ENCODE measurements at regions of chr6 and their contacts with region 1.

Region 1: GRCh38 chr6:138817822-138818308 is 22.0 kb downstream of the ECT2L start:
- DNase-seq: peak; percentile 100
- H3K4me3 ChIP-seq: no peak overlapping the region
- H3K27ac ChIP-seq: peak overlapping the region; percentile 98
- H3K4me1 ChIP-seq: peaks cover 53% of the 10 kb centered on the region
- H3K27me3 ChIP-seq: no peaks in the 10 kb centered on the region
- CTCF ChIP-seq: no peak

Region 2: GRCh38 chr6:138517635-138518034 is 300.2 kb before region 1 on chr6:
- CTCF ChIA-PET with region 1: no interaction called
- dilution Hi-C with region 1: no loop called
- in situ Hi-C with region 1: no loop called
- intact Hi-C with region 1: no loop called
- DNase-seq: peak; percentile 48
- H3K4me3 ChIP-seq: no peak overlapping the region
- H3K27ac ChIP-seq: no peak overlapping the region
- H3K4me1 ChIP-seq: peaks cover 8% of the 10 kb centered on the region
- H3K27me3 ChIP-seq: no peaks in the 10 kb centered on the region
- CTCF ChIP-seq: peak; percentile 87 to 95

Region 3: DNA sequence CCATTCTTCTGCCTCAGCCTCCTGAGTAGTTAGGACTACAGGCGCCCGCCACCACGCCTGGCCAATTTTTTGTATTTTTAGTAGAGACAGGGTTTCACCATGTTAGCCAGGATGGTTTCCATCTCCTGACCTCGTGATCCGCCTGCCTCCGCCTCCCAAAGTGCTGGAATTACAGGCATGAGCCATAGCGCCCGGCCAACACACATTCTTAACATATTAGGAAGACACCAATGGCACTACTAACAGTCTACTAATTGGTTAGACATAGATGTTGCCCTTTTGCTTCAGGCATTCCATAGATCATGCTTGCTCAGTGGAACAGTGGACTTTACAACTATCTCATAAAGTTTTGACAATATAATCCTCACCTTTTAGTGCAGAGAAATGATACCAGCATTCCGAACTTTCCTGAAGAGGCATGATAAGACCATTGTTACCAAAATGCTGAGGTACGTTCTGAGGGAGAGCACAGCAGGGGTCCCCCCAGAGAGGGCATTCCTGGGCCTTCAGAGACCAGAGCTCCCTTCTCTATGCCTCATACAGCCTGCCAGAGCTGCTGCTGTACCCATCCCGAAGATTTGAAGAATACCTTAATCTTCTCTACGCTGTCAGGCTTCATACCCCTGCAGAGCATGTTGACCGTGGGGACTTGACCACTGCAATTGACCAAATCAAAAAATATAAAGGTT is 67.4 kb after region 1 on chr6:
- CTCF ChIA-PET with region 1: no interaction called
- dilution Hi-C with region 1: no loop called
- in situ Hi-C with region 1: no loop called
- intact Hi-C with region 1: loop called (anchors 5 kb)
- DNase-seq: no peak
- H3K4me3 ChIP-seq: no peak overlapping the region
- H3K27ac ChIP-seq: no peak overlapping the region
- H3K4me1 ChIP-seq: peaks cover 7% of the 10 kb centered on the region
- H3K27me3 ChIP-seq: no peaks in the 10 kb centered on the region
- CTCF ChIP-seq: no peak

Region 4: DNA sequence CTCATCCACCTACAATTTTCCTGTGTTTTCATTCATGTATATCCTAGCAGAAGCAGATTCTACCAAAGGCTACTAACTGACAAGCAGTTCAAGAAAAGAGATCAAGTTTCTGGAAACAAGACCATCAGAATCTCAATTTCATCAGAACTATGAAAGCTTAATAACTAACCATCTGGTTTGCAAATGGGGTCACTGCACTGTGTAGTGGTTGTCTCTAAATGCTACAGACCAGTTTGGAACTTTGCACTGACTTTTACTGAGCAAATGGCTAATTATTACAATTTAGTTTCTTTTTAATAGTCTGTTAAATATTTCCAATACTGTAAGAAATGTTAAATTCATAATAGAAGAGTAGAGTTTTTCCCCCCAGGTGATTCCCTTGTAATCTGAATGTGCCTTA is 105.7 kb after region 1 on chr6:
- CTCF ChIA-PET with region 1: no interaction called
- dilution Hi-C with region 1: no loop called
- in situ Hi-C with region 1: loop called in 1 of 2 experiments (anchors 10 kb)
- intact Hi-C with region 1: no loop called
- DNase-seq: no peak
- H3K4me3 ChIP-seq: no peak overlapping the region
- H3K27ac ChIP-seq: no peak overlapping the region
- H3K4me1 ChIP-seq: no peaks in the 10 kb centered on the region
- H3K27me3 ChIP-seq: no peaks in the 10 kb centered on the region
- CTCF ChIP-seq: no peak

Region 5: GRCh38 chr6:139134817-139135581 is 317.1 kb after region 1 on chr6 and contains the start of gene HECA:
- CTCF ChIA-PET with region 1: no interaction called
- dilution Hi-C with region 1: no loop called
- in situ Hi-C with region 1: no loop called
- intact Hi-C with region 1: loop called (anchors 2 kb)
- DNase-seq: peak; percentile 89
- H3K4me3 ChIP-seq: peak within 1 kb of the TSS; percentile 79 to 93 (median 89)
- H3K27ac ChIP-seq: peak within 1 kb of the TSS; percentile 78
- H3K4me1 ChIP-seq: no peaks in the 10 kb centered on the region
- H3K27me3 ChIP-seq: no peaks in the 10 kb centered on the region
- CTCF ChIP-seq: no peak
- total RNA-seq, gene HECA: 15.0 to 23.8 TPM

Region 6: GRCh38 chr6:139334806-139335446 is 517.1 kb after region 1 on chr6:
- CTCF ChIA-PET with region 1: no interaction called
- dilution Hi-C with region 1: no loop called
- in situ Hi-C with region 1: no loop called
- intact Hi-C with region 1: loop called (anchors 10 kb)
- DNase-seq: peak; percentile 87
- H3K4me3 ChIP-seq: no peak overlapping the region
- H3K27ac ChIP-seq: peak overlapping the region; percentile 85
- H3K4me1 ChIP-seq: peaks cover 21% of the 10 kb centered on the region
- H3K27me3 ChIP-seq: no peaks in the 10 kb centered on the region
- CTCF ChIP-seq: no peak

Region 7: DNA sequence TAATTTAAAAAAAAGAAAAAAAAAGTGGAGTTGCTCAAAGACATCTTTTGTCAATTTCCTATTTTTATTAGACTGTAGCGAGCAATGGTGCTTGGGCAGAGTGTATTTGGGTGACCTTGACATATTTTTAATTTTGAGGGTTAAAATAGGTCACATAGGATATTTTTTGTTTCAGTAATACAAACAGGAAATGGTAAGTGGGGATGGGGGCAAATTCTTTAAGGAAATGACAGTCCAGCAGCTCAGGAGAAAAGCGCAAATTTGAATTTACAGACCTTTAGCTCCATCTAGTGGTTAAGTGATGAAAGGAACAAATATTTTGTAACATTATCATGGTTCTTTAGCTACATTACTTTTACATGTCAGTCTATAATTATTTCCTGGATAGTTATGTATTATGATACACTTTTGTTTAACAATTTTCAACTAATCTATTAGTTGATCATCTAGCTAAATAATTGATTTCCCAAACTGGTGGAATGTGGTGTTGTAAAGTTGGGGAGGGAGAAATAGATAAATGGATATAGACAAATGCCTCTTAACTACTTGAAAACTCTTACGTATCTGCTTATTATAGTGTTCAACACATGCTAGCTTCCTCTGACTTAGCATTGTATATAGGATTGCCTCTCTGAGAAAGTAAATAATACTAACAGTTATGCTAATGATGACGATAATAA is 546.6 kb after region 1 on chr6:
- CTCF ChIA-PET with region 1: no interaction called
- dilution Hi-C with region 1: no loop called
- in situ Hi-C with region 1: loop called (anchors 10 kb)
- intact Hi-C with region 1: loop called (anchors 1 kb)
- DNase-seq: peak; percentile 27
- H3K4me3 ChIP-seq: no peak overlapping the region
- H3K27ac ChIP-seq: no peak overlapping the region
- H3K4me1 ChIP-seq: peaks cover 9% of the 10 kb centered on the region
- H3K27me3 ChIP-seq: no peaks in the 10 kb centered on the region
- CTCF ChIP-seq: peak; percentile 41 to 53

Measured in mammary epithelial cell (primary cell).